ENCODE measurements at regions of chr9 and their contacts with region 1.

Region 1: DNA sequence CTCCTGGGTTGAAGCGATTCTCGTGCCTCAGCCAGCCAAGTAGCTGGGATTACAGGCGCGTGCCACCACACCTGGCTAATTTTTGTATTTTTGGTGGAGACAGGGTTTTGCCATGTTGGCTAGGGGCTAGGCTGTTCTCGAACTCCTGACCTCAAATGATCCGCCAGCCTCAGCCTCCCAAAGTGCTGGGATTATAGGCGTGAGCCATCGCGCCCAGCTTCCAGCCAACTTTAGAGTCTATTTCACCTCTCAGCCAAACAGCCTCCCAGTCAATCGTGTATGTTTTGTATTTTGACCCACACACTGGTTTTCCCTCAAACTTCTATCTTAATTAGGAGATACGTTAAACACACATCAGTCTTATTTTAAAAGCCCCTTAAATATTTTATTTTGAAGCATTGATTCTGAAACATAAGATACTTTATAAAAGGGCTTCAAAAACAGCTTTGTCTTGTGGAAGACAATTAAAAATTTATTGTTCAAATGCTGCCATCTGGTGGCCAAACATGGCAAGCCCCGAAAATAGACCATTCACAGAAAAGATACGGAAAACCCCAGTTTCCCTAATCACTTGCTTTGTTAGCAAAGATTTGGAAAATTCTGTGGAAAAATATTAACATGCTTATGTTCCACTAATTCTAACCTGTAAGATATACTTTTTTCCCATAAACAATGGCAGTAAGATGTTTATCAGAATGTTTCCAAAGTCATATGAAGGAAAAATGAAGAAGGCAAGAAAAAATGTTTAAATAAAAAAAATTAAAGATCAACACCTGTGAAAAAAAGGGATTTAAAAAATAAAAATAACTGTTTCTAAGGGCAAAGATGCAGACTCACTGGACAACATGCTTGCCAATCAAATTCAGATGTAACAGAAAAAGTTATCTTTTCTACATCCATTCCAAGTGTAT is 33.1 kb downstream of the APTX start:
- DNase-seq: peak in 1 of 2 donors; percentile 23
- ATAC-seq: no peak
- H3K4me3 ChIP-seq: no peak overlapping the region
- H3K27ac ChIP-seq: no peak overlapping the region
- H3K4me1 ChIP-seq: peaks cover 0 to 5% of the 10 kb centered on the region in 2 donors
- H3K27me3 ChIP-seq: no peaks in the 10 kb centered on the region
- CTCF ChIP-seq: peak; percentile 62 to 85 (median 74)
- POLR2A ChIP-seq: no peak

Region 2: DNA sequence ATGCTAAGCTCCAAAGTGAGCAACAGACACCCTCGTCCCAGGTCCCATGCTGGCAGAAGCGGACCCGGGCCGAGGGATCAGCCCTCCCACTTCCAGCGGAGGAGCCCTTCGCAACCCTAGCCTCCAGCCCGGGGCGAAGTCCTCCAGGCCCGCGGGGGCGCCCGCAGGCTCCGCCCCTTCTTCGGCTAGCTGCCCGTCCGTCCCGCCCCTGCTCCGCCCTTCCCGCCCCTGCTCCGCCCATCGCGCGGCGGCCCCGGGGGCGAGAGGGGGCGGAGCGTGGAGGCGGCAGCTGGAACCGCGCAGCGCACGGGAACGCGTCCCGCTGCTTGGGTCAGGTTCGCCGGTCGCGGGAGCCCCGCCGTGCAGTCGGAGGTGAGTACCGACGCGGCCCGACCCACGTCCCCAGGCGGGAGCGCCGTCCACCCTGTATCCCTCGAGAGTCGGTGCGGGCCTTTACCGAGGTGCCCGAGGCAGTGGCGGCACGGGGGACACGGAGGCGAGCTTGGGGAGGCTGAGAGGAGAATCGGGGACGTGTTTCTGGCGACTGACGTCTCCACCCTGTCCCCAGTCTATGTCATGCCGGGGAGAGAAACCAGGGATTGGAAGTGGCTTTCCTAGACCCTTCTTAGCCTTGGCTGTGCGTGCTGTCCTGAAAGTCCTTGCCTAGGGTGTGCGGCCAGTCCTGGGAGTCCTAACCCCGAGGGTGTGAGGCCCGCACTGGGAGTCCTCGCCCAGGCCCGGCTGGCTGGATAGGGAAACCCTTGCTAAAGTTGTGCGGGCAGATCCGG is 583.8 kb before region 1 on chr9 and contains the start of gene ACO1:
- in situ Hi-C with region 1: loop called in 3 of 4 experiments (anchors 10 kb)
- intact Hi-C with region 1: loop called (anchors 5 kb)
- DNase-seq: peak; percentile 80 to 86
- ATAC-seq: peak; percentile 89 to 93
- H3K4me3 ChIP-seq: peak within 1 kb of the TSS; percentile 67 to 94 (median 80)
- H3K27ac ChIP-seq: peak within 1 kb of the TSS; percentile 88 to 96 (median 90)
- H3K4me1 ChIP-seq: peaks cover 20 to 24% of the 10 kb centered on the region in 2 donors
- H3K27me3 ChIP-seq: no peaks in the 10 kb centered on the region
- CTCF ChIP-seq: peak in 1 of 5 experiments; percentile 12
- POLR2A ChIP-seq: peak; percentile 81 to 86
- total RNA-seq, gene ACO1: 28.3 to 35.0 (median 30.3) TPM

Region 3: GRCh38 chr9:32579706-32580331 is 388.5 kb before region 1 on chr9:
- in situ Hi-C with region 1: loop called in 3 of 4 experiments (anchors 5 to 10 kb)
- intact Hi-C with region 1: loop called (anchors 2 kb)
- DNase-seq: peak; percentile 18 to 31
- ATAC-seq: no peak
- H3K4me3 ChIP-seq: peak overlapping the region in 1 of 4 donors; percentile 4
- H3K27ac ChIP-seq: no peak overlapping the region
- H3K4me1 ChIP-seq: no peaks in the 10 kb centered on the region
- H3K27me3 ChIP-seq: no peaks in the 10 kb centered on the region
- CTCF ChIP-seq: peak; percentile 67 to 91 (median 80)
- POLR2A ChIP-seq: no peak

Region 4: GRCh38 chr9:32589083-32589723 is 379.2 kb before region 1 on chr9:
- in situ Hi-C with region 1: loop called (anchors 5 to 10 kb)
- intact Hi-C with region 1: loop called (anchors 2 kb)
- DNase-seq: no peak
- ATAC-seq: no peak
- H3K4me3 ChIP-seq: no peak overlapping the region
- H3K27ac ChIP-seq: no peak overlapping the region
- H3K4me1 ChIP-seq: no peaks in the 10 kb centered on the region
- H3K27me3 ChIP-seq: no peaks in the 10 kb centered on the region
- CTCF ChIP-seq: peak in 1 of 5 experiments; percentile 6
- POLR2A ChIP-seq: no peak

Region 5: GRCh38 chr9:32823101-32823500 is 145.3 kb before region 1 on chr9:
- in situ Hi-C with region 1: no loop called
- intact Hi-C with region 1: no loop called
- DNase-seq: no peak
- ATAC-seq: no peak
- H3K4me3 ChIP-seq: no peak overlapping the region
- H3K27ac ChIP-seq: no peak overlapping the region
- H3K4me1 ChIP-seq: no peaks in the 10 kb centered on the region
- H3K27me3 ChIP-seq: no peaks in the 10 kb centered on the region
- CTCF ChIP-seq: no peak
- POLR2A ChIP-seq: no peak

Region 6: GRCh38 chr9:32866273-32866672 is 102.1 kb before region 1 on chr9:
- in situ Hi-C with region 1: loop called in 1 of 4 experiments (anchors 25 kb)
- intact Hi-C with region 1: no loop called
- DNase-seq: no peak
- ATAC-seq: no peak
- H3K4me3 ChIP-seq: no peak overlapping the region
- H3K27ac ChIP-seq: no peak overlapping the region
- H3K4me1 ChIP-seq: peaks cover 9 to 14% of the 10 kb centered on the region in 2 donors
- H3K27me3 ChIP-seq: no peaks in the 10 kb centered on the region
- CTCF ChIP-seq: no peak
- POLR2A ChIP-seq: no peak

Region 7: DNA sequence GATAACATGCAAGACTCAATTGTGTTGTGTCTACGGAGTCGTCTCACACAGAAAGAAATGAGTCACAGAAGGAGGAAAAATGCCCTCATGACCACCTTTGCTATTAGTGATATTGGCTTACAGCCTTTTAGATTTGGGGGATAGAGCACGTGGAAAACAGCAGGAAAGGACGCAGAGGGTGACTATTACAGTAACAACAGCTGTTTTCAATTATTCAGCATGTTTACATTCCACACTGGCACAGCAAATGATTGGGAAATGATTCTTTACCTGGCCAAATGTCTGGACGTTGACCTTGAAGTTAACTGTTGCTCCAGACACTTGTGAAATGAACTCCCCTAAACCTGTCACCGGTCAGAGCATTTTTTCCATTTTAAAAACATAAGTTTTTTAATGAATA is 13.7 kb before region 1 on chr9:
- in situ Hi-C with region 1: no loop called
- intact Hi-C with region 1: no loop called
- DNase-seq: no peak
- ATAC-seq: no peak
- H3K4me3 ChIP-seq: no peak overlapping the region
- H3K27ac ChIP-seq: no peak overlapping the region
- H3K4me1 ChIP-seq: no peaks in the 10 kb centered on the region
- H3K27me3 ChIP-seq: no peaks in the 10 kb centered on the region
- CTCF ChIP-seq: no peak
- POLR2A ChIP-seq: no peak